K562 (cell line): ENCODE measurements at regions of chr10 and their contacts with region 1.

Region 1: DNA sequence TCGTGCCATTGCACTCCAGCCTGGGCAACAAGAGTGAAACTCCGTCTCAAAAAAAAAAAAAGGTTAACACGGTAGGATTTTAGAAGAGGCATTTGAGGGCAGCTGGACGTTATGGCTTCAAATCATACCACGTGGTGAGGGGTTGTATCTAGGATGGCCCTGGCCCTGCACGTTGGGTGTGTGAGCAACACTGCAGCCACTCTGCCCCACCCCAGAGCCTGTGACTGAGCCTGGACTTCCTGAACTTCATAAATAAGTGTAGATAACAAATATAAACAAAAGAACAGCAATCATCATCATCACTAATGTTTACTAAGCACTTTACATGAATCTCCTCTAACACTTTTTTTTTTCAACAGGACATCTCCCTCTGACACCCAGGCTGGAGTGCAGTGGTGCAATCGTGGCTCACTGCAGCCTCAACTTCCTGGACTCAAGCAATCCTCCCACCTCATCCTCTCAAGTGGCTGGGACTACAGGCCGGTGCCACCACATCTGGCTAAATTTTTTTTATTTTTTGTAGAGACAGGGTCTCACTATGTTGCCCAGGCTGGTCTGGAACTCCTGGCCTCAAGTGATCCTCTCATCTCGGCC is 169.5 kb upstream of the FRMD4A start:
- DNase-seq: no peak
- ATAC-seq: no peak
- H3K4me3 ChIP-seq: no peak overlapping the region
- H3K27ac ChIP-seq: no peak overlapping the region
- H3K4me1 ChIP-seq: no peaks in the 10 kb centered on the region
- H3K27me3 ChIP-seq: peaks cover 0 to 29% of the 10 kb centered on the region in 2 experiments; a peak in 2 of 5 replicates
- CTCF ChIP-seq: no peak
- EP300 ChIP-seq: no peak
- POLR2A ChIP-seq: no peak
- RAD21 ChIP-seq: no peak

Region 2: GRCh38 chr10:14556285-14556956 is 56.2 kb after region 1 on chr10:
- CTCF ChIA-PET with region 1: interaction called, 3 read pairs
- POLR2A ChIA-PET with region 1: no interaction called
- in situ Hi-C with region 1: no loop called
- intact Hi-C with region 1: loop called (anchors 5 kb)
- DNase-seq: peak; percentile 17 to 47 (median 32)
- ATAC-seq: peak; percentile 92
- H3K4me3 ChIP-seq: no peak overlapping the region
- H3K27ac ChIP-seq: no peak overlapping the region
- H3K4me1 ChIP-seq: no peaks in the 10 kb centered on the region; a peak in 1 of 5 replicates
- H3K27me3 ChIP-seq: peaks cover 5 to 43% of the 10 kb centered on the region in 2 experiments; a peak in 3 of 5 replicates
- CTCF ChIP-seq: peak; percentile 54 to 60 (median 57)
- EP300 ChIP-seq: no peak
- POLR2A ChIP-seq: no peak
- RAD21 ChIP-seq: peak in 1 of 2 experiments; percentile 55; a peak in 2 of 4 replicates

Region 3: GRCh38 chr10:14971867-14972448 is 471.7 kb after region 1 on chr10:
- CTCF ChIA-PET with region 1: interaction called, 15 read pairs
- POLR2A ChIA-PET with region 1: no interaction called
- in situ Hi-C with region 1: loop called (anchors 10 kb)
- intact Hi-C with region 1: loop called (anchors 5 kb)
- DNase-seq: peak in 1 of 4 experiments; percentile 53
- ATAC-seq: peak; percentile 88
- H3K4me3 ChIP-seq: no peak overlapping the region
- H3K27ac ChIP-seq: no peak overlapping the region
- H3K4me1 ChIP-seq: no peaks in the 10 kb centered on the region
- H3K27me3 ChIP-seq: peaks cover 0 to 2% of the 10 kb centered on the region in 2 experiments; a peak in 2 of 5 replicates
- CTCF ChIP-seq: peak; percentile 65 to 75 (median 67)
- EP300 ChIP-seq: no peak
- POLR2A ChIP-seq: no peak
- RAD21 ChIP-seq: peak; percentile 45 to 63